PC-9 (cell line): ENCODE measurements at regions of chr13 and their contacts with region 1.

Region 1: GRCh38 chr13:95834134-95834765 is 157.3 kb downstream of the DNAJC3 start:
- DNase-seq: peak; percentile 51 to 52
- H3K4me3 ChIP-seq: no peak overlapping the region
- H3K27ac ChIP-seq: 0 out of 2 replicates have a peak overlapping the region, but pooled peaks have one; percentile 8
- H3K4me1 ChIP-seq: peaks cover 16% of the 10 kb centered on the region
- H3K27me3 ChIP-seq: no peaks in the 10 kb centered on the region
- CTCF ChIP-seq: peak; percentile 97

Region 2: DNA sequence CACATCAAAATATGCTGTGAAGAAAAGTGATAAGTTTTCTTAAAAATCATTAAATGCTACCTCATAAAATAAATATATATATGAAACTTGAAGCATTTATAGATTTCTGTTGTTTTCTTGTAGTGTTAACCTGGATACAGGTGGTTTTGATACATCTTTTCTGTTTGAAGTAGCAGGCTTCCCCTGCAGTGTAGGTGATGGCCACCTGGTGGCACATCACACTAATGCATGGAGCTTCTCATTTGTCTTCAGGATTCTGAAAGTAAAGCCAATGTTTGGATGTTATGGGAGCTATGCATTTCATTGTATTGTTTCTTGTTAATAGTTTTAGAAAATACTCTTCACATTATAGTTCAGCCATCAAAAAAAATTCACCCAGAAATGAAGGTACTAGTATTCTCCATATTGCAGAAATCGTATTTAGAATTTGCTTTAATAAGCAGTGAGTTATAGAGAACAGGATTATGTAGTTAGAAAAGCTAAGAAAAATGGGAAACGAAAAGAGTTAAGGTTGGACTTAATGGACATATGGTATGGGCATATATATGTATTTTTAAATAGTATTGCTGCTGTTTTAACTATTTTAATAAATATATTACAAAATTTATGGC is 1213.9 kb before region 1 on chr13:
- CTCF ChIA-PET with region 1: no interaction called
- POLR2A ChIA-PET with region 1: no interaction called
- intact Hi-C with region 1: loop called (anchors 2 kb)
- DNase-seq: peak in 1 of 2 experiments; percentile 25
- H3K4me3 ChIP-seq: no peak overlapping the region
- H3K27ac ChIP-seq: no peak overlapping the region
- H3K4me1 ChIP-seq: no peaks in the 10 kb centered on the region
- H3K27me3 ChIP-seq: no peaks in the 10 kb centered on the region
- CTCF ChIP-seq: peak; percentile 93

Region 3: DNA sequence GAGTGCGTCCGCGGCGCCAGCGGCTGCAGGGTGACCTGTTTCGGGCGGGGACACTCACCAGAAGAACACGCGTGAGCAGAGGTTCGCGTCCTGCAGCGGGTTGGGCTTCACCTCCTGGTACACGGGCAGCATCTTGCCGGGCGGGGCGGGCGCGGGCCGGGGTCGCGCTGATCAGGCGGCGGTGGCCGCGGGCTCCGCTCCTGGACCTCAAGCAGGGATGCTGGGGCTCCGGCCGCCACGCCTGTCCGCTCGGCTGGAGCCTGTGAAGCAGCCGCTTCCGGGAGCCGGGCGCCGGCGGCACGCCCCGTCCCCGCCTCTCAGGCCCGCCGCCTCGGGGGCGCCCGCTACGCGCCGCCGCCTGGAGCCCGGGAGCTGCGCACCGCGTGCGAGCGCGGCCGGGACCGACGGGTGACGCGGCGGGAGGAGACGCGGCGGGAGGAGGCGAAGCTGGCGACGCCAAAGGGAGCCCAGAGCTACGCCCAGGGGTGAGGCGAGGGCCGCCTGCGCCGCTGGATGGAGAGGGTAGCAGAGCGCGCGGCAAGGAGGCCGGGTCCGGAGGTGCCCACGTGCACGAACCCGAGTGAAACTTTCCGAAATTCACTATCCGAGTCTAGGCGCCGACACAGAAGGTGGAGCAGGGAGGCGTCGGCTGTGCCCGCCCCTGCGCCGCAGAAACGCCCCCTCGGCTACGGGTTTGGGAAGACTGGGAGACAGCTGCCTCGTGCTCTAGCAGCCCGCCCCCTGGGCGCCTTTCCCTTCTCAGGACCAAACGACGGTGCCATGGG is 532.9 kb before region 1 on chr13 and contains the start of gene ABCC4:
- CTCF ChIA-PET with region 1: no interaction called
- POLR2A ChIA-PET with region 1: no interaction called
- intact Hi-C with region 1: loop called (anchors 2 kb)
- DNase-seq: peak in 1 of 2 experiments; percentile 76
- H3K4me3 ChIP-seq: peak within 1 kb of the TSS; percentile 59
- H3K27ac ChIP-seq: no peak within 1 kb of the TSS; the same call in 1 of the 2 replicates
- H3K4me1 ChIP-seq: peaks cover 24% of the 10 kb centered on the region
- H3K27me3 ChIP-seq: no peaks in the 10 kb centered on the region
- CTCF ChIP-seq: no peak
- total RNA-seq, gene ABCC4: 17.0 and 18.6 TPM in 2 replicates

Region 4: GRCh38 chr13:95403828-95404522 is 430.3 kb before region 1 on chr13:
- CTCF ChIA-PET with region 1: interaction called, 5 read pairs
- POLR2A ChIA-PET with region 1: no interaction called
- intact Hi-C with region 1: loop called (anchors 5 kb)
- DNase-seq: peak; percentile 82 to 83
- H3K4me3 ChIP-seq: no peak overlapping the region
- H3K27ac ChIP-seq: no peak overlapping the region
- H3K4me1 ChIP-seq: peaks cover 8% of the 10 kb centered on the region
- H3K27me3 ChIP-seq: no peaks in the 10 kb centered on the region
- CTCF ChIP-seq: peak; percentile 98

Region 5: GRCh38 chr13:95494082-95494681 is 340.1 kb before region 1 on chr13:
- CTCF ChIA-PET with region 1: interaction called, 4 read pairs
- POLR2A ChIA-PET with region 1: no interaction called
- intact Hi-C with region 1: loop called (anchors 5 kb)
- DNase-seq: peak in 1 of 2 experiments; percentile 63
- H3K4me3 ChIP-seq: no peak overlapping the region
- H3K27ac ChIP-seq: no peak overlapping the region
- H3K4me1 ChIP-seq: peaks cover 16% of the 10 kb centered on the region
- H3K27me3 ChIP-seq: no peaks in the 10 kb centered on the region
- CTCF ChIP-seq: peak; percentile 93

Region 6: DNA sequence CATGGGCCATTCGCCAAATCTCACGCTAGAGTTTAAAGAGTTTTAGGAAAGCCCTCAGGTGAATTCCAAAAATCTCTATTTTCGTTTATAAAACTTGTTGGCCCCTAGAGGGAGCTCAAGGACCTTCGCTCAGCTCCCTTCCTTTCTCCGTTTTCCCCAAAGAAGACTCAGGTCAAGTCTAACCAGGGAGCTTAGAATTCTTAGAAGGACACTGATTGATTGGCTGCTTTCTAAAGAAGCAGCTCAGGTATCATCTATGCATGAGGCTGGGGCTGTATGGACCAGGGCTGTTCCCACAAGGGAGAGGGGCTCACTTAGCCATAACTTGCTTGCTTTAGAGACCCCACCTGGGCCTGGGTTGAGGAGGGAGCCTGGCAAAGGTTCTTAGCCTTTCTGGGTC is 210.2 kb before region 1 on chr13:
- CTCF ChIA-PET with region 1: interaction called, 10 read pairs
- POLR2A ChIA-PET with region 1: no interaction called
- intact Hi-C with region 1: loop called (anchors 1 kb)
- DNase-seq: peak; percentile 15 to 57
- H3K4me3 ChIP-seq: no peak overlapping the region
- H3K27ac ChIP-seq: no peak overlapping the region
- H3K4me1 ChIP-seq: no peaks in the 10 kb centered on the region
- H3K27me3 ChIP-seq: no peaks in the 10 kb centered on the region
- CTCF ChIP-seq: peak; percentile 87